MCF 10A (cell line): ENCODE measurements at regions of chr13 and their contacts with region 1.

Region 1: DNA sequence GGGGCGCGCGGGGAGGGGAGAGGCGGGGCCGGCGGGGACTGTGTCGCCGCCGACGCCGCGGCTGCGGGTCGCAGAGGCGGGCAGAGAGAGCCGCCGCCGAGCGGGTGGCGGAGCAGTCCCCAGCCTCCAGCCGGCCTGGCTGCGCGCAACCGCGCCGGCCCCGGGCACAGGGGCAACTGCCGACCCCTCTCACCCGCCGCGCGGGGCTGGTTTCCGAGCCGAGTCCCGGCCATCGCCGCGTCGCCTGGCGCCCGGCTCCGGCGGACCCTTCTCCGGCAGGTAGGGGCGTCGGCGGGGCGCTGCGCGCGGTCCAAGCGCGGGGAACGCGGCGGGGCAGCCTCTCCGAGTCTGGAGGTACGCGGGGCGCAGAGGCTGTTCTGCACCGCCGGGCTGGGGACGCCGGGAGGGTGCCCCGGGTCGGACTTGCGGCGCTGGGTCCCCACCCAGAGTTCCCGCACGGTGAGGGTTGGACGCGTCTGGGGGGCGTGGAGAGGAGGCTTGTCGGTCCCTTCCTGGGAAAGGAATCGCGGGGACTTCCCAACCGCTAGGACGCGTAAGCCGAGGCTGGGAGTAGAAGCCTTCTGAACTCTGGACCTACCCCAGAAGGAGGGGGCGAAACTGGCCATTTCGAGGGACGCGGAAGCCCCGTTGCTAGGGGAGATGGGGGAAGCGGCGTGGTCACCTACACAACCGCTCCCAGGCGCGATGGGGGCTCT is 133.6 kb upstream of the MYO16 start:
- DNase-seq: no peak
- H3K4me3 Mint-ChIP-seq: no peak overlapping the region
- H3K27ac Mint-ChIP-seq: no peak overlapping the region
- H3K4me1 Mint-ChIP-seq: peaks cover 6% of the 10 kb centered on the region
- H3K27me3 Mint-ChIP-seq: peaks cover 38% of the 10 kb centered on the region
- CTCF ChIP-seq: no peak

Region 2: DNA sequence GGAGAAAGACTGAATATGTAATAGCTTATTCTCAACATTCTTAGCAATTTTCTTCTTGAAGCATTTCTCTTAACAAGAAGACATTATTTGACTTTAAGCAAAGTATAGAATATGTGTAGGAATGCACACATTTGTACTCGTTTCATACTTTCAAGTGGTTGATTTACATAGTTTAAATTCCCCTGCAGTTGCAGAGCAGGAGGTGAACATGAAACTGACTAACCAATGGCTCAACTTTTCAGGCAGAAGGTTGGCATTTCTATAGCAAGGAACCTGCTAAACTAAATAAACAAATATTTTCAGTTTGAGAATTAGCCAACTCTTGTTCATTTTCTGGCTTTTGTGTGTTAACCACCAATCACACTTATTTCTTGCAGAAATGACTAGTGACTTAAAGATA is 11.8 kb before region 1 on chr13:
- CTCF ChIA-PET with region 1: no interaction called
- POLR2A ChIA-PET with region 1: no interaction called
- intact Hi-C with region 1: loop called (anchors 1 kb)
- DNase-seq: no peak
- H3K4me3 Mint-ChIP-seq: no peak overlapping the region
- H3K27ac Mint-ChIP-seq: no peak overlapping the region
- H3K4me1 Mint-ChIP-seq: no peaks in the 10 kb centered on the region
- H3K27me3 Mint-ChIP-seq: peaks cover 24% of the 10 kb centered on the region
- CTCF ChIP-seq: no peak

Region 3: DNA sequence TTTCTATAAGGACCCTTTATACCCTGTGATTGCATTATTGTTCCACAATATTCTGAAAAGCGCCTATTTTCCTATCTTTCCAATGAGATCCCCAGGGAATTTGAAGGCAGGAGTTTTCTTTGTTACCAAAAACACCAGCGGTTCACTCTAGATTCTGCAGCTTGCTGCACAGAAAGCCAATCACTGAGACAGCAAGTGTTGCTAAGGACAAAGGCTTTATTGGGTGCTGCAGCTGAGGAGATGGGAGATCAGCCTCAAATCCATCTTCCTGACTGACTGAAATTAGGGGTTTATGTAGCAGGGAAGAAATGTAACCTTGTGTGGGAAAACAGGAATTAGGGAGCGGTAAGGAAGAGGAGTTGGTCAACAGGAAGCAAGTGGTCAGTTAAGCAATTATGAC is 91.0 kb after region 1 on chr13:
- CTCF ChIA-PET with region 1: no interaction called
- POLR2A ChIA-PET with region 1: no interaction called
- intact Hi-C with region 1: no loop called
- DNase-seq: no peak
- H3K4me3 Mint-ChIP-seq: no peak overlapping the region
- H3K27ac Mint-ChIP-seq: no peak overlapping the region
- H3K4me1 Mint-ChIP-seq: no peaks in the 10 kb centered on the region
- H3K27me3 Mint-ChIP-seq: peaks cover 85% of the 10 kb centered on the region
- CTCF ChIP-seq: no peak

Region 4: DNA sequence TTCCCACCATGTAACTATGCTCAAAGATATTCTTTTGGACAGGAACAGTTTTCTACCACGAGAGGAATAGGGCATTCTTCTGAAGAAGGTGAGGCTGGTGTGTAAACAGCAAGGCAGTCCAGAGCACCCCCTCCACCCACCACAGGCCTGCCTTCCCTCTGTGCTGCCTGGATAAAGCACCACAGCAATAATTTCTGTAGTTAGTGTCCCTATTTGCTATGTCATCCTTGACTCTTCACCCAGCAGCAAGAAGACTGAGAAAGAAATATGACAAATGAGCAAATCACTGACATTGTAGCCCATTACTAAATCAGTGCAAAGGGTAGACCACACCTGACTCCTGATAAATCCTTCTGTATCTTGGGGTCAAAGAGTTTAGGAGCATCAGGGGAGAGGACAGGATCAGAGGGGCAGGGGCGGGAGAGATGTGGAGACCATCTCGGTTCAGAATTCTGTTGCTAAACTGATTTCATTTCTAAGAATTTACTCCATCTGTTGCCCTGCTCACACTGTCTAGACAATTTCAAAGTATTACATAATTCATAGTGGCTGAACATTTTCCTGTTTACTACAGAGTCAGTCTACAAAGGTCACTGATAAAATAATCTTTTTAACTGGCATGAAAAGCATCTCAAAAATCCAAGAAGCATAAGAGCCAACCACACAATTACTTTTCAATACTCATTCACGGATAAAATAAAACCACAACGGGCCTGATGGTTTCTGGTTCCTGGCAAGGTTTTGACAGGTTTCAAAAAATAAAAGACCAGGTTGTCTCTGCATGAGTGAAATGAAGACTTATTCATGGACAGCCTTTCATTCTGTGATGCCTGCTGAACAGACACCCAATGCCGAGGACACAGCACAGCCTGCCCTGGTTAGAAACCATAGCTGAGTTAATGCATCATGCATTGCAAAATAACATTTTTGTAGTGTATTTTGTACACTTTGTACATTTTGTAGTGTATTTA is 1379.0 kb after region 1 on chr13:
- CTCF ChIA-PET with region 1: no interaction called
- POLR2A ChIA-PET with region 1: no interaction called
- intact Hi-C with region 1: no loop called
- DNase-seq: peak; percentile 22
- H3K4me3 Mint-ChIP-seq: no peak overlapping the region
- H3K27ac Mint-ChIP-seq: peak overlapping the region; percentile 86
- H3K4me1 Mint-ChIP-seq: peaks cover 13% of the 10 kb centered on the region
- H3K27me3 Mint-ChIP-seq: no peaks in the 10 kb centered on the region
- CTCF ChIP-seq: no peak